ENCODE measurements at regions of chr6 and their contacts with region 1.

Region 1: GRCh38 chr6:113858480-113859348 is 1.6 kb downstream of the MARCKS start:
- DNase-seq: peak; percentile 96
- H3K4me3 Mint-ChIP-seq: no peak overlapping the region
- H3K27ac Mint-ChIP-seq: no peak overlapping the region
- H3K4me1 Mint-ChIP-seq: no peaks in the 10 kb centered on the region
- H3K27me3 Mint-ChIP-seq: no peaks in the 10 kb centered on the region
- CTCF ChIP-seq: peak; percentile 95

Region 2: GRCh38 chr6:113122060-113122459 is 736.7 kb before region 1 on chr6:
- CTCF ChIA-PET with region 1: interaction called, 6 read pairs
- intact Hi-C with region 1: loop called (anchors 5 kb)
- DNase-seq: peak; percentile 44
- H3K4me3 Mint-ChIP-seq: no peak overlapping the region
- H3K27ac Mint-ChIP-seq: peak overlapping the region; percentile 10
- H3K4me1 Mint-ChIP-seq: peaks cover 30% of the 10 kb centered on the region
- H3K27me3 Mint-ChIP-seq: no peaks in the 10 kb centered on the region
- CTCF ChIP-seq: no peak

Region 3: GRCh38 chr6:113359155-113360140 is 499.3 kb before region 1 on chr6:
- CTCF ChIA-PET with region 1: interaction called, 4 read pairs
- intact Hi-C with region 1: loop called (anchors 2 kb)
- DNase-seq: peak; percentile 40
- H3K4me3 Mint-ChIP-seq: no peak overlapping the region
- H3K27ac Mint-ChIP-seq: peak overlapping the region; percentile 69
- H3K4me1 Mint-ChIP-seq: peaks cover 65% of the 10 kb centered on the region
- H3K27me3 Mint-ChIP-seq: no peaks in the 10 kb centered on the region
- CTCF ChIP-seq: no peak

Region 4: GRCh38 chr6:113632220-113632864 is 226.4 kb before region 1 on chr6:
- CTCF ChIA-PET with region 1: interaction called, 8 read pairs
- intact Hi-C with region 1: loop called (anchors 2 kb)
- DNase-seq: peak; percentile 61
- H3K4me3 Mint-ChIP-seq: peak overlapping the region; percentile 55
- H3K27ac Mint-ChIP-seq: peak overlapping the region; percentile 97
- H3K4me1 Mint-ChIP-seq: peaks cover 57% of the 10 kb centered on the region
- H3K27me3 Mint-ChIP-seq: no peaks in the 10 kb centered on the region
- CTCF ChIP-seq: no peak

Region 5: DNA sequence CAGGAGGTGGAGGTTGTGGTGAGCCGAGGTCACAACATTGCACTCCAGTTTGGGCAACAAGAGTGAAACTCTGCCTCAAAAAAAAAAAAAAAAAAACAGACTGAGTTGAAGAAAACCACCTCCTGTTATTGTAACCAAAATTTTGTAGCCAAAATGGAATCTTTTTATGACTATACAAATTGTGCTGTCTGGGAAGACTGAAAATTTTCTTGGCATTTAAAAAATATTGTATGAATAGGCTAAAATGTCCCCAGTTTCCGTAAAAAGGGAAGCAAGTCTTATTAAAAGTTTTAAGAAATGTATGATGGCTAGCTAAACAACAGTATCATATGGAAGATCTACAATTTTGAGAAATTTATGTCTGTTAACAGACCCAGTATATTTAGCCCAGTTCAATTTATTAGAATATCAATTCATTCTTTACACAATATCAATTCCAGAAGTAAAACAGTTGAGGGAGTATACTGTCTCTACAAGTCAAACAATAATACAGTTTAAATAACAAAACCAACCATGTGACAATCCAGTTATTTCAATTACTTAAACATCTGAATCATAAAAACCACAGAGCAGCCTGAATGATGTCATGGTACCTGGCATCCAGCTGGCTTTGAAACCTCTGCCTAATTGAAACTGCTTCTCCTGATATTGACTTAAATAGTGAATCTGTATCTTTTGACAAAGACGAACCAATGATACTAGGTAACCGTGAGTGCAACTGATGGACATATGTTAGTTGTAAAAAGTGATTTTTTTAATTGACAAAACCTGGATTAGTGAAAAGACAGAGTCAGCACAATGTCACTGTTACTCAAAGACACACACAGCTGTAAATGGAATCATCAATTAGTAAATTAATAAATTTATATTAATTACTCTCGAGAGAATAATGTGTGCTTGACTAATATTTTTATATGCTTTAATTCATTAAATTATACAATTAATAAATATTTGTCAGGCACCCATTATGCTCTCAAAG is 168.1 kb before region 1 on chr6:
- CTCF ChIA-PET with region 1: interaction called, 10 read pairs
- intact Hi-C with region 1: loop called (anchors 2 kb)
- DNase-seq: peak; percentile 43
- H3K4me3 Mint-ChIP-seq: no peak overlapping the region
- H3K27ac Mint-ChIP-seq: peak overlapping the region; percentile 74
- H3K4me1 Mint-ChIP-seq: peaks cover 31% of the 10 kb centered on the region
- H3K27me3 Mint-ChIP-seq: no peaks in the 10 kb centered on the region
- CTCF ChIP-seq: no peak

Region 6: DNA sequence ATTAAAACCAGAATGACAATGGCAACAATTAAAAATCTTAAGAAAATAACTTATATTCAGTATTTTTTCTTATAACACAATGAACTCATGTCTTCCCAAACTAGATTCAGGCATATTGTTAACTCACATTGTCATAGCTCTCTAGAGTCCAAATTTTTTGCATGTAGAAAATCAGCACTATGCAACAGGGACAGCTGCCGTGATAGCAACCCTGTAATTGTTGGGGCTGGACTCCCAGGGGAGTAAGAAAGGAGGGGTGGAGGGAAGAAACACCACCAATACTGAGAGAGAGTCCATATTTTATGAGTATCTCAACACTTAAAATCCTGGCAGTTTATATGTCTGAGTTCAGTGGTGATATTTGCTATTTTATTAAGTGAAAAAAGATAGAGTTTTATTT is 573.7 kb after region 1 on chr6:
- CTCF ChIA-PET with region 1: no interaction called
- intact Hi-C with region 1: no loop called
- DNase-seq: no peak
- H3K4me3 Mint-ChIP-seq: no peak overlapping the region
- H3K27ac Mint-ChIP-seq: no peak overlapping the region
- H3K4me1 Mint-ChIP-seq: no peaks in the 10 kb centered on the region
- H3K27me3 Mint-ChIP-seq: no peaks in the 10 kb centered on the region
- CTCF ChIP-seq: no peak

Measured in Calu3 (cell line).